ENCODE measurements at regions of chr10 and their contacts with region 1.

Region 1: DNA sequence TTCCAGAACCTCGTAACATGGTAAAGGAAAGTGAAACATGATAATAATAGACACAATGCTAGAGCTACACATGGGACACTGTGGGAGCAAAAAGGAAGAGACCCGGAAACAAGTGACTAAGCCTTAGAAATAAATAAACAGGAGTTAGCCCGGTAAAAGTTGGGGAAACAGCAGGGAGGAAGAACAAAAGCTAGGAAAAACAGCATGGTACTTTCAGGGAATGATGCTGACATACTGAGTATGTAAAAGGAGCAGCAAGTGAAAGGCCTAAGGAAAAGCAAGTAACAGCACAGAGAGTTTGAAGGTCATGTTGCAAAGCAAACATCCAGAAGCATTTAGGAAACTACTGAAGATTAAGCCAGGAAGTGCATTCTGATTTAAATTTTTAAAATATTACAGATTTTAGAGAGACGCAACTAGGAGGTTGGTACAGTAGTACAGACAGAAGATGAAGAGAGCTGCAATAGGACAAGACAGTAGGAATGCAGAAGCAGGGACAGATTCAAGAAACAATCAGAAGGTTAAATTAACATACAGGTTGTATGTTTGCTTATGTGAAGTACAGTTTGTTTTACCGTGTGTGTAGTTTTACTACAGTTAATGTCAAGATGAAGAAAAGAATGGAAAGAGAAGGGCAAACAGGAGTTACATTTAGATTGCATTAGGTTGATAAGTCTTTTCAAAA is 63.7 kb downstream of the ARHGAP12 start:
- DNase-seq: no peak
- H3K4me3 Mint-ChIP-seq: no peak overlapping the region
- H3K27ac Mint-ChIP-seq: no peak overlapping the region
- H3K4me1 Mint-ChIP-seq: peaks cover 21% of the 10 kb centered on the region
- H3K27me3 Mint-ChIP-seq: no peaks in the 10 kb centered on the region

Region 2: DNA sequence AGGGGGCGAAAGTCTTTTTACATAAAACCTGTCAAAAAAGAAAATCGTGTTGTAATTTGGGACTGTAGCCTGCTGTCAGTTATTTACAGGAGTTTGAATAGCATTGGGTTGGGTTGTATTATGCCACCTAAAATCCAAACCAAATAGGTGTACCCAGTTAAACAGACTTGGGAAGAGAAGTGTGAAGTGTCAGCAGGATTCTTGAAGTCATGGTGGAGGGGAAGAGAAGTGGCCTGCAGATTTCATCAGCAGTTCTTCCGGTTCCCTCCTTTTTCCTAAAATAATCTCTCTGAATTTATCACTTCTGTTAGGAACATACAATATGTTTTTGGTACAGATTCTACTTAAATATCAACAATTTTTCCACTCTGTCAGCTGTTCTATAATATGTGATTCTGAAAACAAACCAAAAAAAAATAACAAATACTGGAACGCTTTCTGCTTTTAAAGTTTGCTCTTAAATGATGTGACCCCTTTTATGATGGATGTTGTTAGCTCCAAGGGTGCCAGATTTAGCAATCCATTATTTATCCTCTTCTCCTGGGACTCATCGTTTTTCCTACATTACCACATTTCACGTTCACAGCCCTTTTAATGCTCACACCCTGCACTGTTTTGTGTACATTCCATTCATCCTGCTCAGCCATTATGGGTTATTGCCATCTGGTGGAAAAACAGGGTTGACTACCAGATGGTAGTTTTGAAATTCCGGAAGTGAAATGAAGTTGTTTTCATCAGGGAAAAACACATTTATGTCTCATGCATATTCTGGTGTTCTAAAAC is 82.4 kb after region 1 on chr10:
- CTCF ChIA-PET with region 1: interaction called, 6 read pairs
- intact Hi-C with region 1: loop called (anchors 1 kb)
- DNase-seq: no peak
- H3K4me3 Mint-ChIP-seq: no peak overlapping the region
- H3K27ac Mint-ChIP-seq: no peak overlapping the region
- H3K4me1 Mint-ChIP-seq: peaks cover 3% of the 10 kb centered on the region
- H3K27me3 Mint-ChIP-seq: no peaks in the 10 kb centered on the region

Region 3: GRCh38 chr10:32207544-32207943 is 342.6 kb after region 1 on chr10:
- CTCF ChIA-PET with region 1: interaction called, 9 read pairs
- intact Hi-C with region 1: loop called (anchors 1 kb)
- DNase-seq: peak; percentile 74
- H3K4me3 Mint-ChIP-seq: no peak overlapping the region
- H3K27ac Mint-ChIP-seq: no peak overlapping the region
- H3K4me1 Mint-ChIP-seq: peaks cover 3% of the 10 kb centered on the region
- H3K27me3 Mint-ChIP-seq: peaks cover 2% of the 10 kb centered on the region

Measured in activated naive CD4-positive, alpha-beta T cell treated with anti-CD3 and anti-CD28 coated beads for 36 hours (primary cell).